Activated CD4-positive, alpha-beta T cell treated with anti-CD3 and anti-CD28 coated beads for 36 hours (primary cell): ENCODE measurements at regions of chr1 and their contacts with region 1.

Region 1: GRCh38 chr1:116334015-116334547 is 39.0 kb upstream of the ATP1A1 start:
- DNase-seq: no peak
- ATAC-seq: no peak
- H3K4me3 Mint-ChIP-seq: no peak overlapping the region
- H3K27ac Mint-ChIP-seq: no peak overlapping the region
- H3K4me1 Mint-ChIP-seq: peaks cover 31% of the 10 kb centered on the region
- H3K27me3 Mint-ChIP-seq: no peaks in the 10 kb centered on the region

Region 2: DNA sequence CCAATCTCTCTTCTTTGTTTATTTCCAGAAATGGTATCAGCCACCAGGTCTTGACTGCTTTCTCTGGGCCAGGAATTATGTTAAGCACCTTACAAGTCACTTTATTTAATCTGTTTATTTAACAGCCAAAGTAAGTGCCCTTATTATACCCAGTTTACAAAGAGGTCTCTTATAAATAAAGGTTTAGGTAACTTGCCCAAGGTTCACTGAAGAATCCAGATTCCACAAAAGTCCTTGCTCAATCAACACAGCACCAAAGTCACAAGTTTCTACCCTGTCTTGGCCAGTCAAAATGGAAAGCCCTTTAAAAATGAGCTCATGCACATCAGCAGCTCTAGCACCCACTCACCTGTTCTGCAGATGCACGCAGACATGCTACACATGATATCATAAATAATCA is 10.9 kb after region 1 on chr1:
- CTCF ChIA-PET with region 1: interaction called, 10 read pairs
- POLR2A ChIA-PET with region 1: no interaction called
- intact Hi-C with region 1: no loop called
- DNase-seq: no peak
- ATAC-seq: no peak
- H3K4me3 Mint-ChIP-seq: no peak overlapping the region
- H3K27ac Mint-ChIP-seq: no peak overlapping the region
- H3K4me1 Mint-ChIP-seq: peaks cover 62% of the 10 kb centered on the region
- H3K27me3 Mint-ChIP-seq: no peaks in the 10 kb centered on the region

Region 3: DNA sequence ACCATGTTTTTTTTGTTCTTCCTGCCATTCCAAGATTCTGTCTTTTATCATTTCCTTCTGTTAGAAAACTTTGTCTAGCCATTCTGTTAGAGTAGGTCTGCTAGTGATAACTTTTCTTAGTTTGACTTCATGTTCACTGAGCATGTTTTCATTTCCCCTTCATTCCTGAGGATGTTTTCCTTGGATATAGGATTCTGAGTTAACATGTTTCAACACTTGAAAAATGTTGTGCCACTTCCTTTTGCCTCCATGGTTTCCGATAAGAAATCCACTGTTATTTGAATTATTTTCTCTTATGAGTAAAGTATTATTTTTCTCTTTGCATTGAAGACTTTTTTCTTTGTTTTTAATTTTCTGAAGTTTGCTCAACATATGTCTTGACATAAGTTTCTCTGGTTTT is 105.6 kb after region 1 on chr1:
- CTCF ChIA-PET with region 1: no interaction called
- POLR2A ChIA-PET with region 1: no interaction called
- intact Hi-C with region 1: no loop called
- DNase-seq: no peak
- ATAC-seq: no peak
- H3K4me3 Mint-ChIP-seq: no peak overlapping the region
- H3K27ac Mint-ChIP-seq: no peak overlapping the region
- H3K4me1 Mint-ChIP-seq: no peaks in the 10 kb centered on the region
- H3K27me3 Mint-ChIP-seq: peaks cover 3% of the 10 kb centered on the region